GM12878 (cell line): ENCODE measurements at regions of chr2 and their contacts with region 1.

Region 1: GRCh38 chr2:105797298-105797819 is 52.6 kb downstream of the NCK2 start:
- DNase-seq: peak; percentile 65
- ATAC-seq: peak; percentile 66
- H3K4me3 ChIP-seq: peak overlapping the region; percentile 31; the same call in 1 of the 2 replicates
- H3K27ac ChIP-seq: peak overlapping the region; percentile 96
- H3K4me1 ChIP-seq: peaks cover 66% of the 10 kb centered on the region
- H3K27me3 ChIP-seq: no peaks in the 10 kb centered on the region
- CTCF ChIP-seq: no peak
- EP300 ChIP-seq: no peak; a peak in 1 of 4 replicates
- POLR2A ChIP-seq: peak; percentile 63; the same call in 1 of the 2 replicates
- RAD21 ChIP-seq: no peak

Region 2: DNA sequence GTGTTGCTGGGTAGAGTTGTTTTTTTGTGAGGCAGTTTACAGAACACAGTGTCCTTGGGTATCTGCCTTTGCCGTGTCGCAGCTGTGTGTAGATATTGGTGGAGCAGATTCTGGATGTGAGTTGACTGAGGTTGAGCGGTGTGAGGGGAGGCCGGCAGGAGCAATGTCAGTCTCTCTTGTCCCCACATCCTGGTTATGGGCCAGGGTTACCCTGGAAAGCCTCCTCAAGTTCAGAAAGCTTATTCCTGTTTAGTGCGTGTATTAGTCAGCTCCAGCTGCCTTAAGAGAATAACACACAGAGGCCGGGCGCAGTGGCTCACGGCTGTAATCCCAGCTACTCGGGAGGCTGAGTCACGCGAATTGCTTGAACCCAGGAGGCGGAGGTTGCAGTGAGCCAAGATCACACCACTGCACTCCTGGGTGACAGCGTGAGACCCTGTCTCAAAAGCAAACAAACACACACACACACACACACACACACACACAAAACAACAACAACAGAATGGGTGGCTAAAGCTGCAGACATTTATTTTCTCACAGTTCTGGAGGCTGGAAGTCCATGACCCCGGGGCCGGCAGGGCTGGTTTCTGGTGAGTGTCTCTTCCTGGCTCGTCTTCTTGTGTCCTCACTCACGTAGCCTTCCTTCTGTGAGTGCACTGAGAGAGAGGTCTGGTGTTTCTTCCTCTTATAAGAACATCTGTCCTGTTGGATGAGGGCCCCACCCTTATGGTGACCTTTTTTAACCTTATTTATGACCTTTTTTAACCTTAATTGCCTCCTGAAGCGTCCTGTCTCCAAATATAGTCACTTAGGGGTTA is 47.6 kb before region 1 on chr2:
- CTCF ChIA-PET with region 1: interaction called, 29 read pairs
- POLR2A ChIA-PET with region 1: interaction called, 9 read pairs
- RAD21 ChIA-PET with region 1: interaction called, 40 read pairs
- SMC1A ChIA-PET with region 1: interaction called, 70 read pairs
- in situ Hi-C with region 1: no loop called
- intact Hi-C with region 1: loop called (anchors 2 kb)
- DNase-seq: no peak
- ATAC-seq: no peak
- H3K4me3 ChIP-seq: 0 out of 2 replicates have a peak overlapping the region, but pooled peaks have one; percentile 27
- H3K27ac ChIP-seq: peak overlapping the region; percentile 28
- H3K4me1 ChIP-seq: peaks cover 35% of the 10 kb centered on the region
- H3K27me3 ChIP-seq: no peaks in the 10 kb centered on the region
- CTCF ChIP-seq: no peak
- EP300 ChIP-seq: no peak
- POLR2A ChIP-seq: no peak
- RAD21 ChIP-seq: no peak

Region 3: GRCh38 chr2:105775809-105776559 is 21.4 kb before region 1 on chr2:
- CTCF ChIA-PET with region 1: no interaction called
- POLR2A ChIA-PET with region 1: interaction called, 3 read pairs
- RAD21 ChIA-PET with region 1: interaction called, 9 read pairs
- SMC1A ChIA-PET with region 1: interaction called, 10 read pairs
- in situ Hi-C with region 1: no loop called
- intact Hi-C with region 1: no loop called
- DNase-seq: no peak
- ATAC-seq: peak; percentile 82
- H3K4me3 ChIP-seq: peak overlapping the region; percentile 29; the same call in 1 of the 2 replicates
- H3K27ac ChIP-seq: peak overlapping the region; percentile 51
- H3K4me1 ChIP-seq: peaks cover 26% of the 10 kb centered on the region
- H3K27me3 ChIP-seq: no peaks in the 10 kb centered on the region
- CTCF ChIP-seq: no peak
- EP300 ChIP-seq: no peak
- POLR2A ChIP-seq: no peak
- RAD21 ChIP-seq: no peak

Region 4: GRCh38 chr2:105812180-105813044 is 15.1 kb after region 1 on chr2:
- CTCF ChIA-PET with region 1: interaction called, 6 read pairs
- POLR2A ChIA-PET with region 1: interaction called, 27 read pairs
- RAD21 ChIA-PET with region 1: interaction called, 28 read pairs
- SMC1A ChIA-PET with region 1: interaction called, 93 read pairs
- in situ Hi-C with region 1: no loop called
- intact Hi-C with region 1: no loop called
- DNase-seq: no peak
- ATAC-seq: peak; percentile 97
- H3K4me3 ChIP-seq: no peak overlapping the region
- H3K27ac ChIP-seq: peak overlapping the region; percentile 62
- H3K4me1 ChIP-seq: peaks cover 37% of the 10 kb centered on the region
- H3K27me3 ChIP-seq: no peaks in the 10 kb centered on the region
- CTCF ChIP-seq: no peak
- EP300 ChIP-seq: no peak
- POLR2A ChIP-seq: no peak
- RAD21 ChIP-seq: 0 out of 2 replicates have a peak, but pooled peaks have one; percentile 3

Region 5: DNA sequence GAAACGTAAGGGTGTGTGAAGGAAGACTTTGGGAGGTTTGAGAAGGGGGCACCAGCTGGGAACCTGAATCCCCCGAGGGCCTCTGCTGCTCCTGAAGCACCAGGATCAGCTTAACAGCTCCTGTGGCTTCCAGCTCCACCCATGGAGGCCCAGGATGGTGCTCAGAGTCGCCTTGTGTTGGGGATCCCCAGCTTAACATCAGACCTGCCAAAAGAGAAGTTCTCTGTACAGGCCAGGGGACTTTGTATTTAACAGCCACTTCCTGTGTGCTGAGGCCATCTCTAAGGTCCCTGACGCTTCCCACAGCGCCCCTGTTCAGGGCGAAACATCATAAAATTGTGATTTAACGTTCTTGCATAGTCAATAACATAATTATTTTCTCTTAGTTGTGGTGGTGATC is 24.8 kb after region 1 on chr2:
- CTCF ChIA-PET with region 1: interaction called, 16 read pairs
- POLR2A ChIA-PET with region 1: interaction called, 9 read pairs
- RAD21 ChIA-PET with region 1: interaction called, 26 read pairs
- SMC1A ChIA-PET with region 1: interaction called, 20 read pairs
- in situ Hi-C with region 1: no loop called
- intact Hi-C with region 1: no loop called
- DNase-seq: no peak
- ATAC-seq: peak; percentile 99
- H3K4me3 ChIP-seq: no peak overlapping the region; the same call in 1 of the 2 replicates
- H3K27ac ChIP-seq: peak overlapping the region; percentile 73
- H3K4me1 ChIP-seq: peaks cover 13% of the 10 kb centered on the region; the same call in 1 of the 2 replicates
- H3K27me3 ChIP-seq: no peaks in the 10 kb centered on the region
- CTCF ChIP-seq: no peak
- EP300 ChIP-seq: no peak
- POLR2A ChIP-seq: no peak
- RAD21 ChIP-seq: peak; percentile 14; the same call in 1 of the 2 replicates

Region 6: DNA sequence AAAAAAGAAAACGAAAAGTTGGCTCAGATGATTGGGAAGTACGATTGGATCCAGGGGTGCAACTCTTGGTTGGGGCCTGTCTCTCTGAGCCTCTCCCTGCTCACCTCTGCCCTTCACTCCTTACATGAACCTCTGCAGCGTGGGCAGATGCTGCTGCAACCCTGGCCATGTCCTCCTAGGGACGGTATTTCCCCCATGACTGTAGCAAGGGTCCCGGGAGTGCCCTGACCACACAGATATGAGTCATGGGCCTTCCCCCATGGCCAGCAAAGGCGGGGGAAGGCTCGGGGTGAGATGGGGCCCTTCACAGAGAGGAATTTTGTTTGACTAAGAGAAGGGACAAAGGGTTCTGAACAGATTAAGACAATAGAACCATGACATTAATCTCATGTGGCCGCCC is 76.4 kb after region 1 on chr2:
- CTCF ChIA-PET with region 1: interaction called, 3 read pairs
- POLR2A ChIA-PET with region 1: interaction called, 5 read pairs
- RAD21 ChIA-PET with region 1: interaction called, 11 read pairs
- SMC1A ChIA-PET with region 1: interaction called, 8 read pairs
- in situ Hi-C with region 1: no loop called
- intact Hi-C with region 1: loop called (anchors 5 kb)
- DNase-seq: peak; percentile 71
- ATAC-seq: peak; percentile 97
- H3K4me3 ChIP-seq: no peak overlapping the region
- H3K27ac ChIP-seq: peak overlapping the region; percentile 63
- H3K4me1 ChIP-seq: peaks cover 27% of the 10 kb centered on the region
- H3K27me3 ChIP-seq: no peaks in the 10 kb centered on the region
- CTCF ChIP-seq: peak in 1 of 3 experiments; percentile 5; a peak in 1 of 6 replicates
- EP300 ChIP-seq: peak; percentile 70 to 92; a peak in 3 of 4 replicates
- POLR2A ChIP-seq: peak; percentile 52; the same call in 1 of the 2 replicates
- RAD21 ChIP-seq: peak; percentile 38; the same call in 1 of the 2 replicates